HEK293T (cell line): ENCODE measurements at regions of chr1 and their contacts with region 1.

Region 1: DNA sequence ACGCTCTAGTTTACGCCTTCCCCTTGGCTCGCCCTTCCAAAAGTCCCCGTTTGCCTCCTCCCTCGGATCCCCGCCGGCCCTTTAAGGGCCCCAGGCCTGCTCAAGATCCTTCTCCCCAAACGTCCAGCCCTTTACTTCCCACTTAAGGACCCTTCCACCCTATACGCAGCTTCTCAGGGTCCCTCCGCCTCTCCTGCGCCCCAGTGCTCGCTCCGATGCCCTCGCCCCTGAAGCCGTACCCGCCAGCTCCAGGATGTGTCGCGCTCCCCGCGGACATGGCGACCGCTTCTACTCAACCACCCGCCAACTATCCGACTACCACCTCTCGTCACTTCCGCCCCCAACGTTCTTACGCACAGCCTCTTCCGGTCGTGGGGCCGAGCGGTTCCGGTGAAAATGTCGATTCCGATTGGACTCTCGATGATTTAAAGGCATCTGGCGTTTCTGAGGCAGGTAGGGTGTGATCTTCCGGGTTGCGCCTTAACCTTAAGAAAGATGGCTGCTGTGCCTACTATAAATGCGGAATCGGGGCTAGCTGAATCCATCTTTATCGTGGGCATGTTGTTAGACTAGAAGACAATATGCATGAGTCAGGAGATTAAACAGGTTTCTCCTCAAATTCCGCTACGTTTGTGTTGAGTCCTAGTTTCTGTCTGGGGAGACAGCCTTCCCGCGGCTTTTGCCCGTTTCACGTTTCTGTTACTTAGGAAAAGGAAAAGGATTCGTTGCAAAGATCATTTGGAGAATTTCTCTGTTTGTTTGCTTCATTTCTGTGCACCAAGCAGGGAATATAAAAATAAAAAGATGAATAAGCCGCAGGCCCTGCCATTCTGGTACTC is at the start of gene KHDC4:
- DNase-seq: peak; percentile 98

Region 2: GRCh38 chr1:155816351-155816750 is 118.0 kb before region 1 on chr1:
- CTCF ChIA-PET with region 1: no interaction called
- POLR2A ChIA-PET with region 1: no interaction called
- DNase-seq: no peak

Region 3: GRCh38 chr1:155859234-155859829 is 75.0 kb before region 1 on chr1 and contains the start of gene SYT11:
- CTCF ChIA-PET with region 1: no interaction called
- POLR2A ChIA-PET with region 1: interaction called, 32 read pairs
- DNase-seq: peak; percentile 99

Region 4: GRCh38 chr1:155918660-155919059 is 15.7 kb before region 1 on chr1:
- CTCF ChIA-PET with region 1: interaction called, 3 read pairs
- POLR2A ChIA-PET with region 1: interaction called, 15 read pairs
- DNase-seq: no peak

Region 5: GRCh38 chr1:155978325-155978972 is 44.1 kb after region 1 on chr1 and contains the start of gene ARHGEF2:
- CTCF ChIA-PET with region 1: interaction called, 14 read pairs
- POLR2A ChIA-PET with region 1: interaction called, 79 read pairs
- DNase-seq: peak; percentile 80

Region 6: GRCh38 chr1:155996166-155996565 is 61.9 kb after region 1 on chr1:
- CTCF ChIA-PET with region 1: interaction called, 5 read pairs
- POLR2A ChIA-PET with region 1: interaction called, 18 read pairs
- DNase-seq: no peak

Region 7: DNA sequence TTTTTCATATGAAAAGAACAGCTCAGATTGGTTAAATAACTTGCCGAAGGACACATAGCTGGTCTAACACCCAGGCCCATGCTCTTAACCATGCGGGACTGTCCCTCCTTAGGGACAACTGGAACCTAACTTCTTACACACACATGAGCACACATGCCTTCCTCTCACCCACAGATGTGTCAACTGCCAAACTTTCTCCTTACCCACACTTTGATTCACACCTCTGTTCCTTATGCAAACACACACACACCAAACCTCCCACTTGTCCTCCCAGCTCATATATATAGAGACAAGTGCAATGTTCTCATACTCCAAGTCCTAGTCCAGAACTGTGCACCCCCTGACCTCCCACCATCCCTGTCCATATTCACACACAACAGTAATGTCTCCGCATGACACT is 130.9 kb after region 1 on chr1:
- CTCF ChIA-PET with region 1: interaction called, 14 read pairs
- POLR2A ChIA-PET with region 1: interaction called, 5 read pairs
- DNase-seq: no peak